ENCODE measurements at regions of chr1 and their contacts with region 1.

Region 1: DNA sequence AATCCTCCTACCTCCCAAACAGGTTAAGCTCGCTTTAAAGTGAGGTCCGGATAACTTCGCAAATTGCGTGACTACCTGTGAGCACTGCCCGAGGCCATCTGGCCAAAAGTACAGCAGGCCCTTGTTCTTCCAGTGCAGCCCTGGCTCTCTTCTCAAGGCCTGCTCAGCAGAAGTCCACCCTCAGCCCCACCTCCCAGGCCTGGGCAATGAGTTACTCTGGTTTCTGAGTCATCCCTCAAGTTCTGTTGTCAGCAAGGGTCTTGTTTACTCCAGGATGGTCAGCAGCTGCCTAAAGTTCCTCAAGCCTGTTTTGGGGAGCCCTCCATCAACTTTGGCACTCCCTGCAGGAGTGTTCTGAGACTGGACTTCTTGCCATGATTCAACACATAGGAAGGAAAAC is 101.7 kb downstream of the BCAR3 start:
- DNase-seq: peak; percentile 37 to 62
- ATAC-seq: peak; percentile 54 to 70 (median 68)
- H3K4me3 ChIP-seq: no peak overlapping the region
- H3K27ac ChIP-seq: peak overlapping the region; percentile 88
- H3K4me1 ChIP-seq: peaks cover 60% of the 10 kb centered on the region
- H3K27me3 ChIP-seq: no peaks in the 10 kb centered on the region
- CTCF ChIP-seq: no peak

Region 2: GRCh38 chr1:93614986-93615581 is 35.2 kb after region 1 on chr1:
- intact Hi-C with region 1: loop called in 1 of 2 experiments (anchors 5 kb)
- DNase-seq: no peak
- ATAC-seq: peak in 1 of 4 donors; percentile 34
- H3K4me3 ChIP-seq: no peak overlapping the region
- H3K27ac ChIP-seq: peak overlapping the region; percentile 86
- H3K4me1 ChIP-seq: peaks cover 52% of the 10 kb centered on the region
- H3K27me3 ChIP-seq: no peaks in the 10 kb centered on the region
- CTCF ChIP-seq: no peak

Region 3: DNA sequence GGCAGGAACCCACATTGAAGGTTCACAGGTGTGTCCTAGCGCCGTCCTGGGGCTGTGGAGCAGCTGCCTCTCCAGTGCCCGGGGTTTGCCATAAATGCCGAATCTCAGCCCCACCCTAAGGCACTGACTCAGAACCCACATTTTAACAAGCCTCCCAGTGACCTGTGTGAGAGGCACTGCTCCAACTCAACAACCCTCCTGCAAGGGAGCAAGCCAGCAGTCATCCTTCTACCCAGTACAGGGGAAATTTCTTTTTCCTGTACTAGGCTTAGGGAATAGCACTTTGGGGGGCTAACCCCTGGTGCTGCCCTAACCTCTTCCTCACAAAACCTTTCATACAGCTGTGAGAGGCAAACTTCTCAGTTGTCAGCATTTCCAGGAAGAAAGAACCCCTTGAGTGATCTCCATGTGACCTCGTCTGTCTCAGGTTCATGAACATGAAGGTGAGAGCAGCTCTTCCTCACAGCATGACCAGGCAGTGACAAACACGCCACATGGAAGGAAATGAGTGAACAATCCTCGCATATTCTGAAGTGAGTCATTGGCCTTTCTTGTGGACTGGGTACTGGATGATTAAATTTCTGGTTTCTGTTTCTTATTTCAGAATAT is 113.2 kb after region 1 on chr1:
- intact Hi-C with region 1: no loop called
- DNase-seq: no peak
- ATAC-seq: peak; percentile 27 to 66 (median 60)
- H3K4me3 ChIP-seq: no peak overlapping the region
- H3K27ac ChIP-seq: no peak overlapping the region
- H3K4me1 ChIP-seq: no peaks in the 10 kb centered on the region
- H3K27me3 ChIP-seq: no peaks in the 10 kb centered on the region
- CTCF ChIP-seq: no peak

Region 4: GRCh38 chr1:93732514-93732913 is 152.6 kb after region 1 on chr1:
- intact Hi-C with region 1: no loop called
- DNase-seq: no peak
- ATAC-seq: no peak
- H3K4me3 ChIP-seq: no peak overlapping the region
- H3K27ac ChIP-seq: no peak overlapping the region
- H3K4me1 ChIP-seq: peaks cover 5% of the 10 kb centered on the region
- H3K27me3 ChIP-seq: no peaks in the 10 kb centered on the region
- CTCF ChIP-seq: no peak